ENCODE measurements at regions of chr9 and their contacts with region 1.

Region 1: GRCh38 chr9:109349421-109349846 is 28.6 kb upstream of the EPB41L4B start:
- DNase-seq: peak; percentile 89
- ATAC-seq: peak; percentile 93
- H3K4me3 ChIP-seq: no peak overlapping the region
- H3K27ac ChIP-seq: no peak overlapping the region
- H3K4me1 ChIP-seq: peaks cover 3% of the 10 kb centered on the region; the same call in 1 of the 2 replicates
- H3K27me3 ChIP-seq: peaks cover 17% of the 10 kb centered on the region
- CTCF ChIP-seq: no peak
- POLR2A ChIP-seq: no peak
- RAD21 ChIP-seq: no peak

Region 2: DNA sequence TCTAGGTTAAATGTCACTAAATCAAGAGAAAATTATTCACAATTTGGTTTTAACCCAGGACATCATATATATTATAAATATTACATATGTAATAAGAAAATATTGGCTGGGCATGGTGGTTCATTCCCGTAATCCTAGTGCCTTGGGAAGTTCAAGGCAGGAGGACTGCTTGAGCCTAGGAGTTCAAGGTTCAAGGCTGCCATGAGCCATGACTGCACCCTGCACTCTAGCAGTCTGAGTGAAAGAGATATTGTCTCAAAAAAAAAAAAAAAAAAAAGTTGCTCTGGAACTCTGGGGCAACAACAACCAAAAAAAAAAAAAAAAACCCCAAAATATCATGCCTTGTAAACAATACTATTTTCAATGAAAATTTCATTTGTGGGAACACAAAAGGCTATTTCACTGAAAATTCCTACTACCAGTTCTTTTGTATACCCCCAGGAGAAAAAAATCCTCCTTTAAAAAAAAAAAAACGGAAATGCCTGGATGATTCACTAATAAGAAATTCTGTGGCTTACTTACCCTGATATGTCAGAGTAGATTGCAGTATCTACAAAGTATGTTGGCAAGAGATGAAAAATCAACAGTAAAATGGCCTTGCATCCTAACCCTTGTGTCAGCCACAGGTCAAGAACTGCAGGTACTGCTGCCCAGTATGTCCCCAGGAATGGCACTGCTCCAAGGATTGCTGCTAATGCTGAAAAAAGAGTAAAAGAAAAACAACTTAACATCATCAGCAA is 313.6 kb before region 1 on chr9:
- CTCF ChIA-PET with region 1: no interaction called
- POLR2A ChIA-PET with region 1: no interaction called
- dilution Hi-C with region 1: no loop called
- in situ Hi-C with region 1: no loop called
- intact Hi-C with region 1: loop called (anchors 1 kb)
- DNase-seq: peak; percentile 85
- ATAC-seq: peak; percentile 84
- H3K4me3 ChIP-seq: no peak overlapping the region
- H3K27ac ChIP-seq: peak overlapping the region; percentile 98
- H3K4me1 ChIP-seq: peaks cover 16% of the 10 kb centered on the region
- H3K27me3 ChIP-seq: no peaks in the 10 kb centered on the region
- CTCF ChIP-seq: no peak
- POLR2A ChIP-seq: no peak
- RAD21 ChIP-seq: no peak

Region 3: GRCh38 chr9:109401168-109401989 is 51.9 kb after region 1 on chr9:
- CTCF ChIA-PET with region 1: no interaction called
- POLR2A ChIA-PET with region 1: no interaction called
- dilution Hi-C with region 1: no loop called
- in situ Hi-C with region 1: no loop called
- intact Hi-C with region 1: no loop called
- DNase-seq: peak; percentile 35
- ATAC-seq: peak; percentile 72
- H3K4me3 ChIP-seq: no peak overlapping the region
- H3K27ac ChIP-seq: no peak overlapping the region
- H3K4me1 ChIP-seq: no peaks in the 10 kb centered on the region
- H3K27me3 ChIP-seq: no peaks in the 10 kb centered on the region; the same call in 1 of the 2 replicates
- CTCF ChIP-seq: peak; percentile 58
- POLR2A ChIP-seq: no peak
- RAD21 ChIP-seq: peak; percentile 62

Region 4: GRCh38 chr9:110241260-110241857 is 891.9 kb after region 1 on chr9:
- CTCF ChIA-PET with region 1: no interaction called
- POLR2A ChIA-PET with region 1: no interaction called
- dilution Hi-C with region 1: no loop called
- in situ Hi-C with region 1: no loop called
- intact Hi-C with region 1: no loop called
- DNase-seq: peak; percentile 39
- ATAC-seq: peak; percentile 7; the same call in 1 of the 2 replicates
- H3K4me3 ChIP-seq: no peak overlapping the region
- H3K27ac ChIP-seq: no peak overlapping the region
- H3K4me1 ChIP-seq: peaks cover 3% of the 10 kb centered on the region
- H3K27me3 ChIP-seq: no peaks in the 10 kb centered on the region
- CTCF ChIP-seq: no peak
- POLR2A ChIP-seq: no peak
- RAD21 ChIP-seq: no peak